Heart right ventricle (tissue), 16 donors: ENCODE measurements at regions of chr1 and their contacts with region 1.

Region 1: DNA sequence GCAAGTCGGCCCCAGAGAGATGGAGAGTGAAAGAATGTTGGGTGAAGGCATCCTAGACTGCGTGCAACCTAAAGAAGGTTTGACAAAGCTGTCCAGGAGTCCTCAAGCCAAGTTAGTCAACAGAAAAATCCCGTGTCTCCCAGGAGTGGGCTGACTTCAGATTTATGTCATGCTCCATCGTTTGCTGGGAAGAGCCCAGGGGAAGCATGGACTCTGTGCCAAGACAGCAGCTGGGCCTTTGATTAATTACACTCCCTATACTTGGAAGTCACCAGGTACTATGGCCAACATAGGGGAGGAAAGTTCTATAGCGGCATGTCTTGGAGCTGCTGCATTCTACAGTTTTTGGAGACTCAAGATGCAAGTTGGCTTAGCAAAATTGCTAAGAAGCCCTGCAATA is 247.4 kb downstream of the KAZN start:
- DNase-seq: no peak
- ATAC-seq: peak in 1 of 8 donors; percentile 8
- H3K4me3 ChIP-seq: no peak overlapping the region
- H3K27ac ChIP-seq: no peak overlapping the region
- H3K4me1 ChIP-seq: no peaks in the 10 kb centered on the region
- H3K27me3 ChIP-seq: peaks cover 0 to 20% (median 7%) of the 10 kb centered on the region in 7 donors
- CTCF ChIP-seq: no peak

Region 2: GRCh38 chr1:13675151-13675651 is 1170.7 kb before region 1 on chr1:
- intact Hi-C with region 1: no loop called
- DNase-seq: no peak
- ATAC-seq: no peak
- H3K4me3 ChIP-seq: no peak overlapping the region
- H3K27ac ChIP-seq: no peak overlapping the region
- H3K4me1 ChIP-seq: no peaks in the 10 kb centered on the region
- H3K27me3 ChIP-seq: peaks cover 0 to 31% (median 6%) of the 10 kb centered on the region in 7 donors
- CTCF ChIP-seq: no peak

Region 3: DNA sequence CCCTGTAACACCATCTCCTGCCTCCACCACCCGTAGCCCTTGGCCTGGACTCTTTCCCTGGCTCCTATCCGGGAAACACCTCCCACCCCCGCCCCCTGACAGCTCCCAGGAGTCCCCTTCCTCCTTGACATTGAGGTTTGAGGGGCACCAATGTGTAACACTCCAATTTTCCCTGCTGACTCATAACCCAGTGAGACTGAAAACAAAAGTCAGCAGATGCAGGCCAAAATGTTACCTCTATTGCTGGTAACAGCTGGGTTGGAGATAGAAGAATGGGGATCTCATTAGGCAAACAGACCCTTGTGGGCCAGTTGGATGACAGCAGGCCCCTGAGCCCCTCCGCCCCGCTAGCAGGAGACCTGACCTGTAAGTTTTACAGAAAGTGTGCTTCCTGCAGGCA is 10.1 kb before region 1 on chr1:
- intact Hi-C with region 1: loop called in 1 of 10 experiments (anchors 2 kb)
- DNase-seq: no peak
- ATAC-seq: no peak
- H3K4me3 ChIP-seq: no peak overlapping the region
- H3K27ac ChIP-seq: no peak overlapping the region
- H3K4me1 ChIP-seq: no peaks in the 10 kb centered on the region
- H3K27me3 ChIP-seq: peaks cover 0 to 8% (median 0%) of the 10 kb centered on the region in 7 donors
- CTCF ChIP-seq: no peak

Region 4: GRCh38 chr1:14913482-14914177 is 67.8 kb after region 1 on chr1:
- intact Hi-C with region 1: no loop called
- DNase-seq: no peak
- ATAC-seq: no peak
- H3K4me3 ChIP-seq: no peak overlapping the region
- H3K27ac ChIP-seq: no peak overlapping the region
- H3K4me1 ChIP-seq: peaks cover 0 to 7% (median 0%) of the 10 kb centered on the region in 9 donors
- H3K27me3 ChIP-seq: no peaks in the 10 kb centered on the region
- CTCF ChIP-seq: no peak